ENCODE measurements at regions of chr19 and their contacts with region 1.

Region 1: DNA sequence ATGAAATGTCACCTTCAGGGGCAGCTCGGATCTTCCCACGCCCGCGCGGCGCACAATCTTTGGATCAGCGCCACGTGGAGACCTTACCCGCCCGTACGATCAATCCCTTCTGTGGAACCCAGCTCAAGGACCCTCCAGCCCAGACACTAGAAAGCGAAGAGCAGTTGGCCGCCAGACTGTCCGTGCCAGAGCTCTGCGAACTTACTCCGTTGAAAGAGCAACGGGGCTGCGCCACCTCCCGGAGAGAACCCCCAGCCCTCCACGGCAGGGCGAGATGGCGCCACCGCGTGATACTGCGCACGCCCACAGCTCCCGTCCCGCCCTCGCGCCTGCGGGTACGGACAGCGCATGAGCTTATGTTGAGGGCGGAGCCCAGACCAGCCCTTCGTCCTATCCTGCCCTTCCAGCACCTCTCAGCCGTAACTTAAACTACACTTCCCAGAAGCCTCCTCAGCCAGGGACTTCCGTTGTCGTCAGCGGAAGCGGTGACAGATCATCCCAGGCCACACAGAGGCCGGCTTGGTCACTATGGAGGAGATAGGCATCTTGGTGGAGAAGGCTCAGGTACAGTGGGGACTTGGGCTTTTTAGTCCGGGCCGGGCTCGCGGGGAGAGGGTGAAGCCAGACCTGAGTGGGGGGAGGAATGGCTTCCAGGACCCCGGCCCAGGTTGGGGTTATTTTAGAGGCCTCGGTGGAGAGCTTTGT is at the start of gene PSMC4:
- DNase-seq: peak; percentile 99
- ATAC-seq: peak; percentile 98
- H3K4me3 Mint-ChIP-seq: peak within 1 kb of the TSS; percentile 90
- H3K27ac Mint-ChIP-seq: peak within 1 kb of the TSS; percentile 95
- H3K4me1 Mint-ChIP-seq: peaks cover 37% of the 10 kb centered on the region
- H3K27me3 Mint-ChIP-seq: no peaks in the 10 kb centered on the region
- total RNA-seq, gene PSMC4: 94.5 to 141 TPM

Region 2: DNA sequence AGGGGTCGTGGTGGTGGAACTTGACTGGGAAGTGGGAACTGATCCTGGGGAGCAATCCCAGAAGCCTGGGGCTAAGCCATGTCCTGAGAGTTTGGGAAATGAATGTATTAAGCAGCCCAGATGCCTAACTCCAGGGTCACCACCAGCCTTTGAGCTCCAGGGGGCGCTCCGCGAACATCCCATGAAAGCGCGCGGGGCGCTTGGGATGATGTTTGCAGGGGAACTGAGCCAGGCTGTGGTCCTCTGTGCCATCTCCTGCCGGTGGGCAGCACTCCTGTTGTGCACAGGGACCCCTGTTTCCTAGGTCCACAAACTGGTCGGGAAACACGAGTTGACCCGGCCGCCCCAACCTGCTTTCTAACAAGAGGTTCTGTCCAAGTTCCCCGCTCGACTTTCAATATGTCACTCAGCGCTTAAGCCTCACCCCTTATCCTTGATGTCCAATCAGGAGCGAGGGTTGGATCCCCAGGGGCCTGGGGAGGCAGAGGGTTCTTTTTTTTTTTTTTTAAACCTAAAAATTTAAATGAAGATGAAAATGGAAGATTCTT is 177.8 kb before region 1 on chr19:
- CTCF ChIA-PET with region 1: interaction called, 21 read pairs
- DNase-seq: peak; percentile 82
- ATAC-seq: peak; percentile 95
- H3K4me3 Mint-ChIP-seq: peak overlapping the region; percentile 75
- H3K27ac Mint-ChIP-seq: peak overlapping the region; percentile 43
- H3K4me1 Mint-ChIP-seq: peaks cover 26% of the 10 kb centered on the region
- H3K27me3 Mint-ChIP-seq: peaks cover 18% of the 10 kb centered on the region

Region 3: GRCh38 chr19:39873385-39873784 is 97.4 kb before region 1 on chr19:
- CTCF ChIA-PET with region 1: no interaction called
- DNase-seq: no peak
- ATAC-seq: no peak
- H3K4me3 Mint-ChIP-seq: no peak overlapping the region
- H3K27ac Mint-ChIP-seq: no peak overlapping the region
- H3K4me1 Mint-ChIP-seq: no peaks in the 10 kb centered on the region
- H3K27me3 Mint-ChIP-seq: no peaks in the 10 kb centered on the region

Region 4: DNA sequence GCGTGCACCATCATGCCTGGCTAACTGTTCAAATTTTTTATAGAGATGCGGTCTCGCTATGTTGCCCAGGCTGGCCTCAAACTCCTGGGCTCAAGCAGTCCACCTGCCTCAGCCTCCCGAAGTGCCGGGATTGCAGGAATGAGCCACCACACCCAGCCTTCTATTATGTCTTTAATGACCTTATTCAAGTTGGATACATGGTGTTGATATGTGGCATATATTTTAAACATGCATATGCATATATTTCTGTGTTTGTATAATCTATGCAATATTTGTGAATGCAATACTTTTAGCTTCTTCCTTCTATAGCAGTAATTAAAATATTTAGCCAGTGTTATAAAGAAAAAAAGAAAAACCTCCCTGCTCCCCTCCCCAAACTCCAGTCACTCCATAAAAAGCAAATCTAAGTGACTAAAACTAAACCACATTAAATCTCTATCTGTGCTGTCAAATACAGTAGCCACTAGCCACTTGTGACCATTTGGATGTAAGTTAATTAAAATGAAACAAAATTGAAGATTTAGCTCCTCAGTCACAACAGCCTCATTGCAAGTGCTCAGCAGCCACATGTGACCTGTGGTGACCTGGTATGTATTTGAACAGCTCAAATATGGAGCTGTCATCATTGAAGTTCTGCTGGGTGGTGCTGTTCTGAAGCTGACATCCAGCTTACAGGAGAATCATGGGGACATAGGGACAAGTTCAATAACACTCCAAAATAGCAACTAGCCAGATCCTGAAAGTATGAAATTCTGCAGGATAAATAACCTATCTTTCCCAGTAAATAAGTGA is 63.8 kb before region 1 on chr19:
- CTCF ChIA-PET with region 1: interaction called, 17 read pairs
- DNase-seq: no peak
- ATAC-seq: no peak
- H3K4me3 Mint-ChIP-seq: no peak overlapping the region
- H3K27ac Mint-ChIP-seq: no peak overlapping the region
- H3K4me1 Mint-ChIP-seq: peaks cover 2% of the 10 kb centered on the region
- H3K27me3 Mint-ChIP-seq: no peaks in the 10 kb centered on the region

Region 5: DNA sequence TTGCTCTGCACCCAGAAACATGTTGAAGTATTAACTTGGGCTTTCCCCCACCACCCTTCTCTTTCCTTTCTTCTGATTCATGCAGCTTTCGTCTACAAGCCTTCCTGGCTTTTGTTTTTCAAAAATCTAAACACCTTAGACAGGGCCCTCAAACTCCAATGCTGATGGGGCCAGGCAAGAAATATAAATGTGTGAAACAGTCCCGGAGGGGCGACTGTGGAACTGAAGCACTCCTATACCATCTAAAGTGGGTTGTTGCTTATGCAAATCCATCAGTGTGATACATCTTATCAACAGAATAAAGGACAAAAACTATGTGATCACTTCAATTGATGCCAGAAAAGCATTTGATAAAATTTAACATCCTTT is 42.5 kb before region 1 on chr19:
- CTCF ChIA-PET with region 1: interaction called, 10 read pairs
- DNase-seq: no peak
- ATAC-seq: no peak
- H3K4me3 Mint-ChIP-seq: no peak overlapping the region
- H3K27ac Mint-ChIP-seq: no peak overlapping the region
- H3K4me1 Mint-ChIP-seq: no peaks in the 10 kb centered on the region
- H3K27me3 Mint-ChIP-seq: no peaks in the 10 kb centered on the region

Region 6: GRCh38 chr19:39941615-39942365 is 29.0 kb before region 1 on chr19:
- CTCF ChIA-PET with region 1: interaction called, 68 read pairs
- DNase-seq: peak; percentile 82
- ATAC-seq: peak; percentile 80
- H3K4me3 Mint-ChIP-seq: peak overlapping the region; percentile 53
- H3K27ac Mint-ChIP-seq: peak overlapping the region; percentile 87
- H3K4me1 Mint-ChIP-seq: peaks cover 56% of the 10 kb centered on the region
- H3K27me3 Mint-ChIP-seq: no peaks in the 10 kb centered on the region

Region 7: DNA sequence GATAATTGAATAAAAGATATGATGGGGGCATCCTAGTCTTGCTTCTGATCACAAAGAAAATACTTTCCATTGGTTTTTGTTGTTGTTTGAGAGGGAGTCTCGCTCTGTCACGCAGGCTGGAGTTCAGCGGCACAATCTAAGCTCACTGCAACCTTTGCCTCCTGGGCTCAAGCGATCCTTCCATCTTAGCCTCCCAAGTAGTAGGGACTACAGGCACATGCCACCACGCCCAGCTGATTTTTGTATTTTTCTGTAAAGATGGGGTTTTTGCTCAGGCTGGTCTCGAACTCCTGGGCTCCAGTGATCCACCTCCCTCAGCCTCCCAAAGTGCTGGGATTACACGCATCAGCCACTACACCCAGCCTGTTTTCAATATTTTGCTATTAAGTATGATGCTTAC is 16.9 kb before region 1 on chr19:
- CTCF ChIA-PET with region 1: interaction called, 24 read pairs
- DNase-seq: peak; percentile 31
- ATAC-seq: peak; percentile 20
- H3K4me3 Mint-ChIP-seq: no peak overlapping the region
- H3K27ac Mint-ChIP-seq: peak overlapping the region; percentile 66
- H3K4me1 Mint-ChIP-seq: peaks cover 30% of the 10 kb centered on the region
- H3K27me3 Mint-ChIP-seq: no peaks in the 10 kb centered on the region

Region 8: DNA sequence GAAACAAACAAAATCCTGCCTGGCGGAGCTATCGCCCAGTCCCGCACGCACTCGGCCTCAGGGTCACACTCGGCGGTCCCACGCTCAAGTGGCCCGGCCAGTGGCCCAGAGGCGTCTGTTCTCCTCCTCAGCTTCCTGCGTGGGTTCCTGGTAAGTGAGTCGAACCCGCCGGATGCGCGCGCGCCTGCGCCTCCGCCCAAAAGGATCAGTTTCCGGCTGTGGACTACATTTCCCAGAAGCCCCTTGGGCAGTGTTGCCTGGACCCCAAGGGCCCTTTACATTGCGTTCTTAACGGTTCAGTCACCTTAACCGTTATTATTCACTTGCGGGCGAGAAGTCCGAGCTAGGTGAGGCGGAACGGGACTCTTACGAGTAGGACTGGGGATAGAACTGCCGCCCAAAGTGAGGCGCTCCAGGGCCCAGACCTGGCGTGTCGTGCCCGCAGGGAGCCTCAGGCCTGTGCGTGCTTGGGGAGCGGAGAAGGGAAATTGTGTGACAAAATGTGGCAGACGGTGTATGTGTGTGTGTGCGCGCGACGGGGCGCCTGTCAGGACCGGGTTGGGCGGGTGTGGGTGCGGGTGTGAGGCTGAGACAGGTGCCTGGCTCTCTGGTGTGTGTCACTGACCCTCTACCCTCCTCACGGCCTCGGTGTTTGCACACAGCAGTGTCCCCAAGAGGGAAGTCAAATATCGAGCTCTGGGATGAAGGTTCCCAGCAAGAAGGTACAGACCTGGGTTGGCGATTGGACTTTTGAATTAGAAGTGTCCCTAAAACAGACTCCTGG is 26.2 kb after region 1 on chr19 and contains the start of gene ZNF546:
- CTCF ChIA-PET with region 1: interaction called, 26 read pairs
- DNase-seq: peak; percentile 96
- ATAC-seq: peak; percentile 94
- H3K4me3 Mint-ChIP-seq: peak within 1 kb of the TSS; percentile 92
- H3K27ac Mint-ChIP-seq: peak within 1 kb of the TSS; percentile 92
- H3K4me1 Mint-ChIP-seq: peaks cover 31% of the 10 kb centered on the region
- H3K27me3 Mint-ChIP-seq: no peaks in the 10 kb centered on the region
- total RNA-seq, gene ZNF546: 5.0 to 6.5 TPM

Region 9: GRCh38 chr19:40025938-40026596 is 55.2 kb after region 1 on chr19:
- CTCF ChIA-PET with region 1: no interaction called
- DNase-seq: no peak
- ATAC-seq: no peak
- H3K4me3 Mint-ChIP-seq: no peak overlapping the region
- H3K27ac Mint-ChIP-seq: no peak overlapping the region
- H3K4me1 Mint-ChIP-seq: no peaks in the 10 kb centered on the region
- H3K27me3 Mint-ChIP-seq: no peaks in the 10 kb centered on the region

Region 10: GRCh38 chr19:40104754-40105153 is 133.9 kb after region 1 on chr19:
- CTCF ChIA-PET with region 1: no interaction called
- DNase-seq: no peak
- ATAC-seq: no peak
- H3K4me3 Mint-ChIP-seq: no peak overlapping the region
- H3K27ac Mint-ChIP-seq: no peak overlapping the region
- H3K4me1 Mint-ChIP-seq: no peaks in the 10 kb centered on the region
- H3K27me3 Mint-ChIP-seq: peaks cover 4% of the 10 kb centered on the region

Measured in activated CD8-positive, alpha-beta memory T cell treated with anti-CD3 and anti-CD28 coated beads, Interleukin-2, amount 10 ng/mL, durations not matched to agents 7 days and 5 days (primary cell).